Mammary epithelial cell (primary cell): ENCODE measurements at regions of chr15 and their contacts with region 1.

Region 1: GRCh38 chr15:72998226-72998625 is 54.0 kb upstream of the NEO1 start:
- DNase-seq: peak; percentile 55
- H3K4me3 ChIP-seq: no peak overlapping the region
- H3K27ac ChIP-seq: peak overlapping the region; percentile 4
- H3K4me1 ChIP-seq: peaks cover 16% of the 10 kb centered on the region
- H3K27me3 ChIP-seq: no peaks in the 10 kb centered on the region
- CTCF ChIP-seq: no peak

Region 2: DNA sequence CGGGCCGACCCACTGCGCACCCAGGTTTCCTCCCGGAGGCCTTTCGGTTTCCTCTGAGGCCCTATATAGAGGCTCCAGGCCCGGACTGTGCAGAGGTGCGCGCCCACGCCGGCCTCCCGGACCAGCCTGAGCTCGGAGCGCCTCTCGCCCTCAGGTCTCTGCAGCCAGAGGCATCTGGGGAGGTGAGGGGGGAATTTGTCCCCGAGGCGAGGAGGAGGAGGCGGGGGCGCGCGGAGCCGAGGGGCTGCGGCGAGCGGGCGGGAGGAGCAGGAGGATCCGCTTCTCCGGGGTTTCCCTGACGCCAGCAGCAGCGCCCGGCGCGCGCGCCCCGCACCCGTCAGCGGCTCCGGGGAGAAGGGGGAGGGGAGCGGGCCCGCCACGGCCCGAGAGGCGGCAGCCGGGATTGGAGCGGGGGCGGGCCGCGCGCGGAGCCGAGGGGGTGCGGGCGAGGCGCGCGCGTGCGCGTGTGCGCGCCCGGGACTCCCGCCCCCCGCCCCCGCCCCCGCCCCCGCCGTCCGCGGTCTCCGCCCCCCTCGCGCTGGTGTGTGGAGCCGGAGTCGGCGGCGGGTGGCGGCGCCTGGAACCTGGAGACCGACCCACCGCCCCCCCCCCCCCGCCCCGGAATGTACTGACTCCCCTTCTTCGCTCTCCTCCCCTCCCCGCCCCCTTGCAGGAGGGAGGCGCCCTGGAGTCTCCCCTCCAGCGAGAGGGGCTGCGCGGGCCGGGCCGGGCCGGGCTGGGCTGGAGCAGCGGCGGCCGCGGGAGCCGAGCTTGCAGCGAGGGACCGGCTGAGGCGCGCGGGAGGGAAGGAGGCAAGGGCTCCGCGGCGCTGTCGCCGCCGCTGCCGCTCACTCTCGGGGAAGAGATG is 53.8 kb after region 1 on chr15 and contains the start of gene NEO1:
- CTCF ChIA-PET with region 1: no interaction called
- dilution Hi-C with region 1: no loop called
- in situ Hi-C with region 1: no loop called
- intact Hi-C with region 1: loop called (anchors 2 kb)
- DNase-seq: peak; percentile 78
- H3K4me3 ChIP-seq: peak within 1 kb of the TSS; percentile 88 to 97 (median 88)
- H3K27ac ChIP-seq: no peak within 1 kb of the TSS
- H3K4me1 ChIP-seq: peaks cover 13% of the 10 kb centered on the region
- H3K27me3 ChIP-seq: no peaks in the 10 kb centered on the region
- CTCF ChIP-seq: no peak
- total RNA-seq, gene NEO1: 17.0 to 23.3 TPM